Posterior vena cava (tissue), 2 donors: ENCODE measurements at regions of chr20 and their contacts with region 1.

Region 1: GRCh38 chr20:32521780-32522525 is 63.2 kb downstream of the NOL4L start:
- DNase-seq: peak; percentile 88

Region 2: GRCh38 chr20:32445539-32446273 is 76.2 kb before region 1 on chr20:
- intact Hi-C with region 1: no loop called
- DNase-seq: peak; percentile 72

Region 3: GRCh38 chr20:32652739-32653526 is 131.0 kb after region 1 on chr20:
- intact Hi-C with region 1: loop called (anchors 2 kb)
- DNase-seq: peak; percentile 94

Region 4: DNA sequence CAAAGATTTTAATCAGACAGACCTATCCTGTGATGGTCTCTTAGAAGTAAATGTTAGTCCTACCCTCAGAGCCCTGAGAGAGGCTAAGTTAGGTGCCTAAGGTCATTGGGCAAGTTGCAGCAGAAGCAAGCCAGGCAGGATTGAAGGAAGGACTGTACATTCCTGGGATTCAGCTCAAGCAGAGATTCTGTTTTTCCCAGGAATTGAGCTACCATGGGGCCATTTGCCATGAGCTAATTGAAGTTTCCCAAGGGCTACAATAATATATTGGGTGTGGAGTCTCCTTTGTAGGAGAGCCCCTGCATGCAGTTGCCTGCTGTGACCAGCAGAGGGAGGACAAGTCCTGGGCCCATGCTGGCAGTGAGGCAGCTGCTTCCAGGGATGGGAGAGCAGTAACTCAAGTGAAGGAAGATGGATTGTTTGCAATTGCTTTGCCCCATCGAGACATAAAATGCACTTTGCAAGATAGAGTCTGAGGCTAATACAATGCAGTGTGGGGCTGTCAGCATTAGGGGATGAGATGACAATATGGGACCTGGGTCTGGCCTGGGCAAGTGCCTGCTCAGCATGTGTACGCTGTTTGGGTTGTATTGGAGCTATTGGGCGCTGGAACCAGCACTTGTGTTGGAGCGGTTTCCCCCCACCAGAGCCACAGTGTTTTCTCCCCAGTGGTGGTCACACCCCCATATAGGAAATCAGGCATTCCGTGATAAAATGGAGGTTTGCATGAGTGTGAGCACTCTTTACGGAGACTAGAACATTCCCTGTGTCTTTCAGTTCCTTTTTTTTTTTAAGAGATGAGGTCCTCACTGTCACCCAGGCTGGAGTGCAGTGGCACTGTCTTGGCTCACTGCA is 268.2 kb after region 1 on chr20:
- intact Hi-C with region 1: loop called in 1 of 2 experiments (anchors 10 kb)
- DNase-seq: peak; percentile 90